Psoas muscle (tissue), 8 donors: ENCODE measurements at regions of chr1 and their contacts with region 1.

Region 1: DNA sequence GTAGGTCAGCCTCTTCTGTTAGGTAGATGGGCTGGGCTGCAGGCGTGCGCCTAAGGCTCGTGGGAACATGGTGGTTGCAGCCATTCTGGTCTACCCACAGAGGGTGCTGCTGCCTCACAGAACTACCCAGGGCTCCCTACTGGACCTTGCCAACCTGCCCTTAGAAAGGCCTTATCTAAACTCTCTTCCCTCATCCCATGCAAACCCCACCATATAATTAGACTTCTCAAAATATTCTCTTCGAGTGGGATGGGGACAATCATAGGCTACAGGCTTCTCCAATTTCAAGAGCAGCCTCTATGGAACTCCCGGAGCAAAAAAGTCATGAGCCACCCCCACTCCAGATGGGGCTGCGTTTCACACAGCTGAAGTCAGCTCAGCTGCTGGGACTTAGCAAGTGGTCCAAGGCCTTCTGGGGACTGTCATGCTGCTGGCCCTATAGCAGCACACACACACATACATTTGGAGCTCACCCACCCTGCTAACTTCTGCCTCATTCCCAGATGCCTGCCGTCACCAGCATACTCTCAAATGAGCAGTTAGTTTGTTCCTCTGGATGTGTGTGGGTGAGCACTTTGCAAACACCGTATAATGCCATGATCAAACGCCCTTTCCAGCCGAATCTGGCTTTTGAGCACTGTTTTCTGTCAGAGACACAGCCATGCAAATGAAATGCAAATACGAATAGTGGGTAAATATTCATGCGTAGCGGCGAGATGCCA is 6.1 kb upstream of the SDHB start:
- DNase-seq: peak; percentile 61 to 83
- ATAC-seq: peak; percentile 80 to 86 (median 82)
- H3K4me3 ChIP-seq: no peak overlapping the region
- H3K27ac ChIP-seq: no peak overlapping the region
- H3K4me1 ChIP-seq: peaks cover 28% of the 10 kb centered on the region
- H3K27me3 ChIP-seq: no peaks in the 10 kb centered on the region
- CTCF ChIP-seq: peak; percentile 78

Region 2: GRCh38 chr1:17080880-17081279 is 21.0 kb after region 1 on chr1:
- intact Hi-C with region 1: no loop called
- DNase-seq: no peak
- ATAC-seq: peak; percentile 44 to 56 (median 46)
- H3K4me3 ChIP-seq: no peak overlapping the region
- H3K27ac ChIP-seq: peak overlapping the region; percentile 69
- H3K4me1 ChIP-seq: peaks cover 18% of the 10 kb centered on the region
- H3K27me3 ChIP-seq: no peaks in the 10 kb centered on the region
- CTCF ChIP-seq: no peak

Region 3: DNA sequence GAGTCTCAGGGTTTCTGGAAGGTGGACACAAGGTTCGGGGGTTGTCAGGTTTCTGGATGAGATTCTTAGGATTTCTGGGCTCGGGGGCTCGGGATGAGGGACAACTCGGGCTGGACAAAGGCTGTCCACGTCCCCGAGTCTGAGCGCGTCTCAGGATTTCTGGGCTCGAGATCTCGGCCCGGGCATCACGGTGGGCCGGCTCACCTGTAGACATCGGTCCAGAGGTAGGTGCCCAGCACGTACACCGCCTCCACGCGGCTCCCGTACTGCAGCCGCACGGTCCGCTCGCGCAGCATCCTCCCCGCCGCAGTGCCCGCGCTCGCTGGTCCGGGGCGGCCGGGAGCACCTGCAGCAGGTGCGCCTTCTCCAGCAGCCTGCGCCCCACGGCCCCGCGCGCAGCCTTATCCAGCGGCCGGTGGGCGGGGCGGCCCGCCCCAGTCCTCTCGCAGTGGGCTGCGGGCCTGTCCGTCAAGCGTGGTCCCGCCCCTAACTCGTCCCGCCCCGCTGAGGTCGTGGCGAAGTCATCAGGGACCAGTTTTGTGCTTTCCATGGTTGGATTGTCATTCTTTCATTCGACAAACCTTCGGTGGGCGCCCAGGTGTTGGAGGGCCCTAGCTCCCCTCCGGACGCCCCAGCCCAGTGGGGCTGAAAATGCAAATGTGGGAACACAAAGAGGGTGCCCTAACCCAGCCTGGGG is 59.3 kb after region 1 on chr1 and contains the start of gene PADI2:
- intact Hi-C with region 1: loop called (anchors 2 to 5 kb)
- DNase-seq: peak; percentile 78 to 87
- ATAC-seq: peak; percentile 63 to 69 (median 66)
- H3K4me3 ChIP-seq: peak within 1 kb of the TSS; percentile 88
- H3K27ac ChIP-seq: peak within 1 kb of the TSS; percentile 92
- H3K4me1 ChIP-seq: peaks cover 52% of the 10 kb centered on the region
- H3K27me3 ChIP-seq: no peaks in the 10 kb centered on the region
- CTCF ChIP-seq: no peak
- total RNA-seq, gene PADI2: 198 to 956 (median 431) TPM

Region 4: DNA sequence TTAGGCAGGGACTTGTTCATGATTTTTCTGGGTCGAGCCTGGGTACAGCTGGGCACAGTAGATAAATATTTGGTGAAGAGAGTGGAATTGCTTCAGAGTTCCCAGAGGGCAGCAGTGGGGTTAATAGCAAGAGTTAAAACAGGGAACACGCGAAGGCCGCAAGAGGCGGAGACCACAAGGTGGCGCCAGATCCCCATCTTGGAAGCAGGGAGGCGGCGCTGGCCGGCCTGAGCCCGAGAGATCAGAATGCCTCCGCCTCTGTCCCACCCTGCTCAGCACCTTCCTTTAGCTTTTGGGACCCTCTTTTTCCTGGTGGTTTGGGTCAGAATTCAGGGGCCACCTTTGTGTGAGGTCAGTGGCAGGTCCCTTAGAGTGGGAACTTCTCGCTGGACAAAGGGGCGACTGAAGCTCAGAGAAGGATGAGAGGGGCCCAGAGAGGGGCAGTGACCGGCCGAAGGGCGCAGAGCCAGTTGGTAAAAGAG is 65.9 kb after region 1 on chr1:
- intact Hi-C with region 1: loop called in 1 of 2 experiments (anchors 2 kb)
- DNase-seq: peak; percentile 88 to 93
- ATAC-seq: peak; percentile 49 to 73 (median 60)
- H3K4me3 ChIP-seq: no peak overlapping the region
- H3K27ac ChIP-seq: no peak overlapping the region
- H3K4me1 ChIP-seq: peaks cover 21% of the 10 kb centered on the region
- H3K27me3 ChIP-seq: no peaks in the 10 kb centered on the region
- CTCF ChIP-seq: peak; percentile 95

Region 5: DNA sequence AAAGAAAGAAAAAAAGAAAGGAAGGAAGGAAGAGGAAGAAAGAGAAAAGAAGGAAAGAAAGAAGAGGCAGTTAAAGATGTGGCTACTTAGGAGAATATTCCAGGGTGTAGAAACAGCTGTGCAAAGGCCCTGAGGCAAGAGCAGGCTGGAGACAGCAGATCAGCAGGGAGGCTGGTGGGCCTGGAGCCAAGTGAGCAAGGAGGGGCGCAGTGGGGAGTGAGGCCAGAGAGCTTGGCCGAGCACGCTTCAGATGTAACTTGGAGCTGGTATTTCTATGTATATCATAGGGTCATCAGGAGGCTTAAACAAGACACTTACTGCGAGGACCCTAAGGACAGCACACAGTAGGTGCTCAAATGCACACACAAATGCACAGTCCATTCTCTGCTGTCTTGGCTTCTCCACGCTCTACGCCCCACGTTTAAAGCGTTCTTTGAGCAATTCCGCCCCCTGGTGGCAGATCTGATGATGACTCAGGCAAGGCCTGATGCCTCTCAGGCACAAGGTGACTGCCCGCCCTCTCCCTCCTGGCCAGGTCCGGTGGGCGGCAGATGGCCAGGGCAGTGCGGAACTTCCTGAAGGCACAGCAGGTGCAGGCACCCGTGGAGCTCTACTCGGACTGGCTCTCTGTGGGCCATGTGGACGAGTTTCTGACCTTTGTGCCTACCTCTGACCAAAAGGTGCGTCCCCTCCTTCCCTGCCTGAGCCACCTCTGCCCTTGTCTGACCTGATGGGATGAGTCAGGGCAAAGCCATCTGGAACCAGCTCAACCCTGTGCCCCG is 177.1 kb after region 1 on chr1:
- intact Hi-C with region 1: loop called (anchors 1 to 2 kb)
- DNase-seq: peak; percentile 83 to 92
- ATAC-seq: peak; percentile 71 to 86 (median 77)
- H3K4me3 ChIP-seq: no peak overlapping the region
- H3K27ac ChIP-seq: no peak overlapping the region
- H3K4me1 ChIP-seq: peaks cover 3% of the 10 kb centered on the region
- H3K27me3 ChIP-seq: peaks cover 0 to 2% (median 0%) of the 10 kb centered on the region in 3 donors
- CTCF ChIP-seq: peak; percentile 94

Region 6: DNA sequence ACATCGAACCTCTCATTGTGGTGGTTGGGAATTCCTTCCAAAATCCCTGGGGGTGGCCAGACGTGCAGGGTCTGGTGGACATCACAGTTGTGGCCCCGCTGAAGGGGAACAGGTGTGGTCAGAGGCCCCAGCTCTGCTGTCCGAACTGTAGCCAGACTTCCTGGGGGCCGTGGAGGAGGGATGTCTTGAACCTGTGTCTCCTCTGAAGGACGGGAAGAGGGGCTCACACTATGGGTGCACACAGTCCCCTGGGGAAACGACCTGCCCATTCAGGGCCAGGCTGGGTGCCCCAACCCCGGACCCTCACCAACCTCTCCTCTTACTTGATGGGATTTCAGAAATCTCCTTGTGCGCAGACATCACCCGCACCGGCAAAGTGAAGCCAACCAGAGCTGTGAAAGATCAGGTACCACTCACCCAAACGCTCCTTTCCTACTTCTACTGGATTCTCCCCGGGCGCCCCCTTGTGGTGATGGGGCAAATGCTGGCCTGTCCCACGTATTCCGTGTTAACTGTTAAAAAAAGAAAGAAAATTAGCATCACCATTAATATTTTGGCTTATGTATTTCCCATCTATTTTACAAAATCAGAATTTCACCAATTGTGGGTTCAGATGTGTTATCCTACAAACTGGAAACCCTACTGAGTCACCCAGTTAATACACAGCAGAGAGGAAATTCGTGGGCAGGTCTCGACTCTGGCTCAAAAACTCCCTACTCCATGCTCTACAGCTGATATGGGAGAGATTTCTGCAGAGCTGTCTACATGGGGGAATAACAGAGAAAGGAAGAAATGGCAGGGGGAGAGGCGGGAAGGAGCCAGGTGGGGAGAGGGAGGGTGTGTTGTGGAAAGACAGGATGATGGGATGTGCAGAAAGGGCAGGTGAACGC is 276.2 kb after region 1 on chr1:
- intact Hi-C with region 1: loop called in 1 of 2 experiments (anchors 1 kb)
- DNase-seq: peak; percentile 67 to 79
- ATAC-seq: peak in 3 of 4 donors; percentile 43 to 65 (median 64)
- H3K4me3 ChIP-seq: no peak overlapping the region
- H3K27ac ChIP-seq: no peak overlapping the region
- H3K4me1 ChIP-seq: no peaks in the 10 kb centered on the region
- H3K27me3 ChIP-seq: peaks cover 0 to 20% (median 6%) of the 10 kb centered on the region in 3 donors
- CTCF ChIP-seq: peak; percentile 76

Region 7: DNA sequence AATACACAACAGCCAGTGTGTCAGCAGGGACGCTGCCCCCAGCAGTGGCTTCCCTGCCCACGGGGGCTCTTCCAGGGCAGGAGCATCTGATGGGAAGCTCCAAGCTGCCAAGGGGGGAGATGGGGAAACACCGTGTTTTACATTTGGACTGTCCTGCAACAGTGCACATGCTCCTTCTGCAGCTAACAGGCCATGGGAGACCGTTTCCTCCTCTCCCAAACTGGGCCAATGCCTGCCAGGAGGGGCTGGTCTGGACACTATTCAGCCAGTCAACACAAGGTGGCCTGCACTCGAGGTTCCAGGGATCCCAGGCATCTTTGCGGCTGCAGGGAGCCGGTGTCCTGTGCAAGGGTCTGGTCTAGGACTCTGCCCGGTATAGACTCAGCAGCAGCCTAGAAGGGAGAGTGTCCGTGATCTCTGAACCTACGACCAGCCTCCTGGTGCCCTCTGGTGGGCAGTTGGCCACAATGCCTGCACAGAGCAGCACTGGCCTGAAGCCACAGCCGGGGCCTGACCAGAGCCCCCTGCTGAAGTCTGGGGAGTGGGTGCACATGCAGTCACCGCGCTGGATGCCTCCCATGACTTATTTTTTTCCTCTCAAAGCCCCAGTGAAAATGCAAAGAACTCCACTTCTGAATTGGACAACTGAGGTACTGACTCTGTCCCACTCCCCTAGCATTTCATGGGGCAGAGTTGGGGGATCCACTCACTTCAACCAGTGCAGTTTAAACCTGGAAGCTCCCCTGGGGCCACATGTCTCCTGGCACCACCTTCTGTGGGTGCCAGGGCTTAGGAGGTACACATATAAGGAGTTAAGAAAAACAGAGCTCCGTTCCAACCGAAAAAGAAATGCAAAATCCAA is 346.2 kb after region 1 on chr1:
- intact Hi-C with region 1: loop called in 1 of 2 experiments (anchors 5 kb)
- DNase-seq: peak; percentile 50 to 73
- ATAC-seq: peak; percentile 85 to 94 (median 88)
- H3K4me3 ChIP-seq: no peak overlapping the region
- H3K27ac ChIP-seq: no peak overlapping the region
- H3K4me1 ChIP-seq: no peaks in the 10 kb centered on the region
- H3K27me3 ChIP-seq: no peaks in the 10 kb centered on the region
- CTCF ChIP-seq: peak; percentile 60